Activated T-helper 1 cell treated with anti-CD3 and anti-CD28 coated beads, Interleukin-12 subunit alpha, Interleukin-12 subunit beta, Interleukin-2, Interleukin-4 antibody, amounts not matched to agents 30 ng/mL and 10 ng/mL and 1 ng/mL, durations not matched to agents 14 hours and 24 hours and 36 hours (primary cell): ENCODE measurements at regions of chr4 and their contacts with region 1.

Region 1: GRCh38 chr4:139651282-139652194 is 14.1 kb upstream of the MGST2 start:
- DNase-seq: peak; percentile 29
- H3K4me3 Mint-ChIP-seq: no peak overlapping the region
- H3K27ac Mint-ChIP-seq: no peak overlapping the region
- H3K4me1 Mint-ChIP-seq: peaks cover 20% of the 10 kb centered on the region
- H3K27me3 Mint-ChIP-seq: no peaks in the 10 kb centered on the region

Region 2: DNA sequence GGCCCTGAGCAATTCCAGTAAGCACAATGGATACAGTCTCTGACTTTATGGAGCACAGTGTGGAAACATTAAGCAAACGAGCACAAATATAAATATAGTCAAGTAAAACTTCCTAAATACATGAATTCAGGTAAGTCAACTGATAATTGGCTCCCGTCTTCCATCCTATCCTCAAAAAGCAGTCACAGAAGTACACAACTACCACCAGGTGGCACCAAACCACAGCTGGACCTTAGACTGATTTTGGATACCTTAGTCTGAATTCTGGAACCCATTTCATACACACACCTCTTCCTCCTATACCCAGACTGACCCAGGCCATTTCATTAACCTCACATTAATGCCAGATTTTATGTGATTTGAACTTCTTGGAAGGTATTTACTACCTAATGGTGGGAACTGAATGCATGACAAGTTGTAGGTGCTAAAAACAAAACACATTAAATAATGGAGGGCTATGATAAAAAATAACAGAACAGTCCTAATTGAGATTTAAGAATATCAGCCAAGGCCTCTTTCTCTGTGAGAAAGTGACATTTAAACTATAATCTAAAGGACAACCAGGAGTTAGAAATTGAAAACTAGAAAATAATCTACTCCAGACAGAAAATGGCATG is 552.1 kb before region 1 on chr4:
- intact Hi-C with region 1: loop called (anchors 1 kb)
- DNase-seq: peak; percentile 54
- H3K4me3 Mint-ChIP-seq: no peak overlapping the region
- H3K27ac Mint-ChIP-seq: no peak overlapping the region
- H3K4me1 Mint-ChIP-seq: no peaks in the 10 kb centered on the region
- H3K27me3 Mint-ChIP-seq: no peaks in the 10 kb centered on the region

Region 3: GRCh38 chr4:139416073-139416673 is 235.4 kb before region 1 on chr4:
- intact Hi-C with region 1: loop called (anchors 2 kb)
- DNase-seq: peak; percentile 3
- H3K4me3 Mint-ChIP-seq: no peak overlapping the region
- H3K27ac Mint-ChIP-seq: no peak overlapping the region
- H3K4me1 Mint-ChIP-seq: peaks cover 27% of the 10 kb centered on the region
- H3K27me3 Mint-ChIP-seq: no peaks in the 10 kb centered on the region

Region 4: GRCh38 chr4:139501927-139502899 is 149.3 kb before region 1 on chr4:
- intact Hi-C with region 1: loop called (anchors 1 kb)
- DNase-seq: no peak
- H3K4me3 Mint-ChIP-seq: no peak overlapping the region
- H3K27ac Mint-ChIP-seq: no peak overlapping the region
- H3K4me1 Mint-ChIP-seq: no peaks in the 10 kb centered on the region
- H3K27me3 Mint-ChIP-seq: no peaks in the 10 kb centered on the region

Region 5: DNA sequence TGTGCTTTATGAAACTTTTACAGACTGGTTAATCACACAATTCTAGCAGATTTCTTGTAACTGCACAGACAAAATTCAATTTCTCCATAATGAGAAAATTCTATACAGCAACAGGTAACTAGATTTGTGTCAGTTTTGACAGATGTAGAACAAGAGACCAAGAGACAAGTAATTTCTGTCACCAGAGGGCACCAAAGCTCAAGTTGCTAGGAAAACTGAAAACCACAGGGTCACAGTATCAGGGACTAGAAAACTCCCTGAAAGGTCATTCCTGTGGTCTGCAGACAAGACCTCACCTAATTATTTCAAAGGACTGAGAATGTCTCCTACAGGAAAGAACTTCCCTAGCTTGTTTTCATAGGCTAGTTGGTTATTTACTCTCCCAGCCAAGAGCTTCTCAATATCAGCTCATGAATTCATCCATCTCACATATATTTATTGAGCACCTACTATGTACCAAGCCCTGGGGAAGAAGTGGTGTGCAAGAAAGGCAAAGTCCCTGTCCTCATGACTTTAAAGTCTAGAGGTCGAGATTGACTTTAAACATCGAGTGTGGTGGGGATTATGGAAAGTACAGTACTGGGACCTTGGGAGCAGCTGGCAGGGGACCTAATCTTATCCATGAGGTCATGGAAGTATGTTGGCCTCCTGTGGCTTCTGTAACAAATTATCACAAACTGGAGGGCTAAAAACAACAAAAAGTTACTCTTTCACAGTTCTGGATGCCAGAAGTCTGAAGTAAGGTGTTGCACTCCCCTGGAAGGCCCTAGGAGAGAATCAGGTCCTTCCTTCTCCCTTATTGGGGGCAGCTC is 47.8 kb before region 1 on chr4:
- intact Hi-C with region 1: loop called (anchors 1 kb)
- DNase-seq: peak; percentile 9
- H3K4me3 Mint-ChIP-seq: no peak overlapping the region
- H3K27ac Mint-ChIP-seq: no peak overlapping the region
- H3K4me1 Mint-ChIP-seq: peaks cover 15% of the 10 kb centered on the region
- H3K27me3 Mint-ChIP-seq: peaks cover 2% of the 10 kb centered on the region

Region 6: DNA sequence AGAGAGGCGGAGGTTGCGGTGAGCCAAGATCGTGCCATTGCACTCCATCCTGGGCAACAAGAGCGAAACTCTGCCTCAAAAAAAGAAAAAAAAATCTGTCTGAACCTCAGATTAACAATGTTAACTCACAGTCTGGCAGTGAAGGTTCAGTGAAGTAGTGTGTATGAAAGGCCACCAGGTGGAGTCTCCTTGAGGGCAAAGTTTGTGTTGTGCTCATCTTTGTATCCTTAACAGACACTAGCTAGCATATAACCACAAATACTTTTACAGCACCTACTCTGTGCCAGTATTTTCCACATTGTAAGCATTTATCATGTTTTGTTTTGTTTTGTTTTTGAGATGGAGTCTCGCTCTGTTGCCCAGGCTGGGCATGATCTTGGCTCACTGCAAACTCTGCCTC is 31.9 kb before region 1 on chr4:
- intact Hi-C with region 1: loop called (anchors 1 kb)
- DNase-seq: no peak
- H3K4me3 Mint-ChIP-seq: no peak overlapping the region
- H3K27ac Mint-ChIP-seq: no peak overlapping the region
- H3K4me1 Mint-ChIP-seq: no peaks in the 10 kb centered on the region
- H3K27me3 Mint-ChIP-seq: no peaks in the 10 kb centered on the region

Region 7: GRCh38 chr4:139794158-139794954 is 142.8 kb after region 1 on chr4:
- intact Hi-C with region 1: no loop called
- DNase-seq: no peak
- H3K4me3 Mint-ChIP-seq: no peak overlapping the region
- H3K27ac Mint-ChIP-seq: no peak overlapping the region
- H3K4me1 Mint-ChIP-seq: no peaks in the 10 kb centered on the region
- H3K27me3 Mint-ChIP-seq: peaks cover 25% of the 10 kb centered on the region